Posterior cingulate gyrus (tissue), 11 donors: ENCODE measurements at regions of chr2 and their contacts with region 1.

Region 1: GRCh38 chr2:101697124-101698013 is at the start of gene MAP4K4:
- DNase-seq: peak; percentile 73 to 96 (median 79)

Region 2: DNA sequence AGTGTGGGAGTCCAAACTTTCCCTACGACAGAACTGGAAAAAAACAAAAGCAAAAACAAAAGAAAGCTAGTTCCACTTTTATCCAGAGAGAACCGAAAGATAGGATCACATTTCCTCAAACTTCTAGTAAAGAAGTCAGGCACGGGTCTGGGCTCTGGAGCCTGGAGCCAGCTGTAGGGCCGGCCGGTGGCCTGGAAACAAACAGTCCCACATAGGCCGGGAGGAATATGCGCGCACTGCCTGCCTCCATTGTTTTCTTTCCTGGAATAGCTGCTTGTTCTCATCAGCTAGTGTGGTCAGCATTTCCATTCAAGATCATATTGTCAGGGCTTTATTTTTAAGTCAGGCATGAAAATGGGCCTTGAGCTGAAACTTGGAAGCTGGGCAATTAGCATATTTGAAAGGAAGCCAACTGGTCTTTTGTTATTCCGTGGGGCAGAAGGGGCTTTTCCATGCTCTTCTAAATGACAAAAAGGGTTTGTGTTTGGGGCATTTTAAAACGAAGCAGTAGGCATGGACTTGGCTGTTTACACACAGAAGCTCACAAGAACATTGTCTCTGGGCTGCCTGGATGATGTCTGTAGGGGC is 163.7 kb before region 1 on chr2:
- intact Hi-C with region 1: loop called (anchors 2 kb)
- DNase-seq: peak; percentile 72 to 97 (median 80)

Region 3: DNA sequence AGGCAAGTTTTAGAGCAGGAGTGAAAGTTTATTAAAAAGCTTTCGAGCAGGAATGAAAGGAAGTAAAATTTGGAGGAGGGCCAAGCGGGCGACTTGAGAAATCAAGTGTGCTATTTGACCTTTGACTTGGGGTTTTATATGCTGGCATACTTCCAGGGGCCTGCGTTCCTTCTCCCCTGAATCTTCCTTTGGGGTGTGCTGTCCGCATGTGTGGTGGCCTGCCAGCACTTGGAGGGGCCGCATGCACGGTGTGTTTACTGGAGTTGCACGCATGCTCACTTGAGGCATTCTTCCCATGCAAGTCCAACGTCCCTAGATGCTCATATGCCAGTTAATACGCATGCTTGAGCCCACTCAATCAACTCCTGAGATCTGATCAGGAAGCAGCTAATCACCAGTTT is 78.2 kb before region 1 on chr2:
- intact Hi-C with region 1: loop called (anchors 10 kb)
- DNase-seq: no peak

Region 4: DNA sequence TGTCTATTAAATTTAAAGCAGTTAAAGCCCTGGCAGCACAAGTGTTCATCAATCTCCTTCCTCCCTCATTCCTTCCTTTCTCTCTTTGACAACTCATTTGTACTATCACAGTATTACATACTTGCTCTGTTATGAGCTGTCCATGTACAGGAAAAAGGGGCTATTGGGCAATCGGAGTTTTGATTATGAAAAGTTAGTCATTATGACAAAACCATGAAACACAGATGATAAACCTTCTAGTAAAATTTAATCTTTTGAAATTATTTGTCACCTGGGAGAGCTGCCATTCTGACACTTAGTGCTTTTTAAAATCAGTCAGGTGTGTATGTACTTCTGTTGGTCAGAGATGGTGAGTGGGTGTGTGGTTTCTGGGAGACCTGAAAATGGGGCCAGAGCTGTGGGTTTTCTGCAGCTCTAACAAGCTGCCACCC is 39.5 kb after region 1 on chr2:
- intact Hi-C with region 1: loop called (anchors 5 kb)
- DNase-seq: no peak

Region 5: GRCh38 chr2:101823347-101823791 is 126.0 kb after region 1 on chr2:
- intact Hi-C with region 1: loop called (anchors 5 kb)
- DNase-seq: peak in 6 of 10 donors; percentile 40 to 84 (median 62)